ENCODE measurements at regions of chr6 and their contacts with region 1.

Region 1: GRCh38 chr6:95203153-95203754 is 374.1 kb upstream of the MANEA start:
- DNase-seq: peak; percentile 40
- H3K4me3 ChIP-seq: peak overlapping the region in 1 of 2 experiments; percentile 36; a peak in 1 of 4 replicates
- H3K27ac ChIP-seq: no peak overlapping the region
- H3K4me1 ChIP-seq: no peaks in the 10 kb centered on the region
- H3K27me3 ChIP-seq: no peaks in the 10 kb centered on the region
- CTCF ChIP-seq: peak; percentile 83
- EP300 ChIP-seq: no peak
- RAD21 ChIP-seq: peak; percentile 82

Region 2: DNA sequence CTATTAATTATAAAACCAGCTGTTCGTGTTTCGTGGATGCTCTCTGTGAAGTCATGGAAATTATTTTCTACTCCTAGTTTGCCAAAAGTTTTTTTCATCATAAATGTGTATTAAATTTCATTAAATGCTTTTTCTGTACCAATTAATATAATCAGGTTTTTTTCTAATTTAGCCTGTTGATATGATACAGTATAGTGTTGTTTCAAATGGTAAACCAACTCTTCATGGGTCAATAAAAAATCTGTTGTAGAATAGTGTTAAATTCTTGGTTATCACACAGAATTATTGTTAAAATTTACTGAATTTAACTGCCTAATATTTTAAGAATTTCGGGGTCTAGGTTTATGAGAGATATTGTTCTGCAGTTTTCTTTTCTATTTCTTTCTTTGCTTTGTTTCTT is 131.8 kb before region 1 on chr6:
- CTCF ChIA-PET with region 1: no interaction called
- POLR2A ChIA-PET with region 1: no interaction called
- DNase-seq: no peak
- H3K4me3 ChIP-seq: no peak overlapping the region
- H3K27ac ChIP-seq: no peak overlapping the region
- H3K4me1 ChIP-seq: no peaks in the 10 kb centered on the region
- H3K27me3 ChIP-seq: no peaks in the 10 kb centered on the region
- CTCF ChIP-seq: no peak
- EP300 ChIP-seq: no peak
- RAD21 ChIP-seq: no peak

Region 3: DNA sequence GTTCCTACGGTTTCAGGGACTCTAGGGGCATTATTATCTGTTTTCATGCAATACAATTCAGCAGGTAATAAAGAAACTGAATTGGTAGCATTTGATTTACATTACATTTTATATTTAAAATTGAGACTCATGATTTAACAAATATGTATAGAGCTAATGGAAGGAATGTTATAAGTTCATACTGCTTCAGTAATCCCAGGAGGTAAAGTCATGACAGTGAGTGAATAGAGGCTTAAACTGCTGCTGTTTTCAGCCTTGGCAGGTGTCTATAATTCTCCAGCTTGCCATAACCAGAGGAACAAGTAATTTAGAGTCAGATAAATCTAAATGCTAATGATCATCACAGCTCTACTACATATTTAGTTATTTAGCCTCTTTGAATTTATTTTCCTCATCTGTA is 13.3 kb after region 1 on chr6:
- CTCF ChIA-PET with region 1: interaction called, 16 read pairs
- POLR2A ChIA-PET with region 1: no interaction called
- DNase-seq: no peak
- H3K4me3 ChIP-seq: no peak overlapping the region
- H3K27ac ChIP-seq: no peak overlapping the region
- H3K4me1 ChIP-seq: no peaks in the 10 kb centered on the region
- H3K27me3 ChIP-seq: no peaks in the 10 kb centered on the region
- CTCF ChIP-seq: no peak
- EP300 ChIP-seq: no peak
- RAD21 ChIP-seq: no peak

Region 4: GRCh38 chr6:95249175-95249574 is 45.9 kb after region 1 on chr6:
- CTCF ChIA-PET with region 1: interaction called, 20 read pairs
- POLR2A ChIA-PET with region 1: no interaction called
- DNase-seq: no peak
- H3K4me3 ChIP-seq: no peak overlapping the region
- H3K27ac ChIP-seq: no peak overlapping the region
- H3K4me1 ChIP-seq: no peaks in the 10 kb centered on the region; a peak in 1 of 4 replicates
- H3K27me3 ChIP-seq: no peaks in the 10 kb centered on the region
- CTCF ChIP-seq: no peak
- EP300 ChIP-seq: no peak
- RAD21 ChIP-seq: no peak

Region 5: DNA sequence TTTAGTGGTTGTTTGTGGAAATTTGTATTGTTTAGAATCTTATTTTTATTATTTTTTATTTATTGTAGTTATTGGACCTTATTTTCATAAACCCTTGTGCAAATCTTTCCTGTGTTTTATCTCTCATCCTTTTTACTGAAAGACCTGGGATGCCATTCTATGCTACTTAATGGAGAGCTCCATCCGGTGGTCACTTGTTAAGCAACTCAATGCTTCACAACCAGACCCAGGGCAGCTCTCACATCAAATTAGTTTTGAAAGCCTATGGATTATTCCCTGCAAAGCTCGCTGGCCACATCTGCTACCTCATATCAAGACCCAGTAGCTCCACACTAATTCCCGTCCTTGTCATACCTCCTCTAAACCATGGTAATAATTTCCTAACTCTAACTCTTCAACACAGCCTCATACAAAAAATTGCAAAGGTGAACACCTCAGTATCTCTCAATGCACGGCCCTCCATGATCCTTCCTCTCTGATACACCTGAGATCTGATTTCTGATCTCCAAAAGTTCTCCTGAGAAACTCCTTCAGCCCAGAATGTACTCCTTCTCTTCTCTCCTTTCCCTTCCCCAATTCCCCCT is 77.5 kb after region 1 on chr6:
- CTCF ChIA-PET with region 1: interaction called, 51 read pairs
- POLR2A ChIA-PET with region 1: no interaction called
- DNase-seq: peak; percentile 5
- H3K4me3 ChIP-seq: no peak overlapping the region; a peak in 1 of 4 replicates
- H3K27ac ChIP-seq: no peak overlapping the region
- H3K4me1 ChIP-seq: no peaks in the 10 kb centered on the region; a peak in 1 of 4 replicates
- H3K27me3 ChIP-seq: no peaks in the 10 kb centered on the region
- CTCF ChIP-seq: peak; percentile 34
- EP300 ChIP-seq: no peak
- RAD21 ChIP-seq: peak; percentile 67